ENCODE measurements at regions of chr3 and their contacts with region 1.

Region 1: GRCh38 chr3:141441381-141442364 is 45.2 kb upstream of the RASA2 start:
- DNase-seq: peak in 2 of 5 donors; percentile 62 to 87
- H3K4me3 ChIP-seq: no peak overlapping the region
- H3K27ac ChIP-seq: peak overlapping the region in 1 of 2 donors; percentile 67
- H3K4me1 ChIP-seq: peaks cover 0 to 12% (median 0%) of the 10 kb centered on the region in 3 donors
- H3K27me3 ChIP-seq: no peaks in the 10 kb centered on the region
- CTCF ChIP-seq: peak; percentile 74

Region 2: DNA sequence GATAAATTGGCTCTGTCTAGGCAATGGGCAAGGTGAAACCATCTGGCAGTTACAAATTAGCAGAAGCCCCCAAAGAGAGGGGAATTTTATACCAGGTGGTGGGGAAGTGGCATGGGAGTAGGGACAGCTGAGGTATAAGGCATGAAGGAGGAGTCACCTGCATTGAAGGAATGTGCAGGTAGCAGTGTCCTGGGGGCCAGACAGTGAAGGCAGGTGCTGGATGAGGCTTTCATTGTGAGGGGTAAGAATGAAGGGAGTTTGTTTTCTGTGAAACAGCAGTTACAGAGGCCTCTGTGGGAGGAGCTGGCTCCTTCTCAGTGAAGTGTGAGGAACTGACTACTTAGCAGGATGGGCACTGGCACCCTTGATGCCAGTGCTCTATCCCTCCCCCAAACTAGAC is 229.1 kb before region 1 on chr3:
- intact Hi-C with region 1: no loop called
- DNase-seq: no peak
- H3K4me3 ChIP-seq: no peak overlapping the region
- H3K27ac ChIP-seq: no peak overlapping the region
- H3K4me1 ChIP-seq: no peaks in the 10 kb centered on the region
- H3K27me3 ChIP-seq: no peaks in the 10 kb centered on the region
- CTCF ChIP-seq: no peak

Region 3: DNA sequence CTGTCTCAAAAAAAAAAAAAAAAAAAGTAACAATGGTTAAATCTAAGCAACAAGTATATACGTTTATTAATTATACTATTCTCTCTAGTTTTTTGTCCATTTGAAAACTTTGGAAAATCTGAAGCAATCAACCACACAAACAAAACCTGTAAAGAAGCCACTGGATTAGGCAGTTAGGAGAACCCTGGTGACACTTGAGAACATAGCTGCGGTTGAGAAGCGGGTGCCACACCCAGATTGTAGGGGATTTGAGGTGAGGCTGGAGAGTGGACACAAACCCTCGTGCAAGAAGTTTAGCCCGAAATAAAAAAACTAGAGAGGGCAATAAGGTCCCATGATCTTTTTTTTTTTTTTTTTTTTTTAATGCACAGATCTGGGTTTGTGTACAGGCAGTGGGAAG is 99.3 kb before region 1 on chr3:
- intact Hi-C with region 1: no loop called
- DNase-seq: no peak
- H3K4me3 ChIP-seq: no peak overlapping the region
- H3K27ac ChIP-seq: no peak overlapping the region
- H3K4me1 ChIP-seq: no peaks in the 10 kb centered on the region
- H3K27me3 ChIP-seq: no peaks in the 10 kb centered on the region
- CTCF ChIP-seq: no peak

Region 4: GRCh38 chr3:141353652-141354495 is 87.8 kb before region 1 on chr3:
- intact Hi-C with region 1: loop called (anchors 10 kb)
- DNase-seq: no peak
- H3K4me3 ChIP-seq: no peak overlapping the region
- H3K27ac ChIP-seq: no peak overlapping the region
- H3K4me1 ChIP-seq: no peaks in the 10 kb centered on the region
- H3K27me3 ChIP-seq: no peaks in the 10 kb centered on the region
- CTCF ChIP-seq: no peak

Region 5: GRCh38 chr3:141529256-141530132 is 87.8 kb after region 1 on chr3:
- intact Hi-C with region 1: no loop called
- DNase-seq: no peak
- H3K4me3 ChIP-seq: no peak overlapping the region
- H3K27ac ChIP-seq: no peak overlapping the region
- H3K4me1 ChIP-seq: no peaks in the 10 kb centered on the region
- H3K27me3 ChIP-seq: no peaks in the 10 kb centered on the region
- CTCF ChIP-seq: no peak

Measured in kidney (tissue), 22 donors.